ENCODE measurements at regions of chr11 and their contacts with region 1.

Region 1: GRCh38 chr11:67288452-67289225 is 464 bp upstream of the ANKRD13D start:
- DNase-seq: peak; percentile 96
- ATAC-seq: peak; percentile 76
- H3K4me3 Mint-ChIP-seq: peak overlapping the region; percentile 80
- H3K27ac Mint-ChIP-seq: peak overlapping the region; percentile 98
- H3K4me1 Mint-ChIP-seq: peaks cover 46% of the 10 kb centered on the region
- H3K27me3 Mint-ChIP-seq: no peaks in the 10 kb centered on the region
- CTCF ChIP-seq: no peak

Region 2: GRCh38 chr11:67277231-67277961 is 11.2 kb before region 1 on chr11:
- CTCF ChIA-PET with region 1: interaction called, 20 read pairs
- POLR2A ChIA-PET with region 1: interaction called, 280 read pairs
- intact Hi-C with region 1: loop called (anchors 1 kb)
- DNase-seq: peak; percentile 85
- ATAC-seq: peak; percentile 93
- H3K4me3 Mint-ChIP-seq: peak overlapping the region; percentile 59
- H3K27ac Mint-ChIP-seq: peak overlapping the region; percentile 98
- H3K4me1 Mint-ChIP-seq: peaks cover 85% of the 10 kb centered on the region
- H3K27me3 Mint-ChIP-seq: no peaks in the 10 kb centered on the region
- CTCF ChIP-seq: no peak

Region 3: DNA sequence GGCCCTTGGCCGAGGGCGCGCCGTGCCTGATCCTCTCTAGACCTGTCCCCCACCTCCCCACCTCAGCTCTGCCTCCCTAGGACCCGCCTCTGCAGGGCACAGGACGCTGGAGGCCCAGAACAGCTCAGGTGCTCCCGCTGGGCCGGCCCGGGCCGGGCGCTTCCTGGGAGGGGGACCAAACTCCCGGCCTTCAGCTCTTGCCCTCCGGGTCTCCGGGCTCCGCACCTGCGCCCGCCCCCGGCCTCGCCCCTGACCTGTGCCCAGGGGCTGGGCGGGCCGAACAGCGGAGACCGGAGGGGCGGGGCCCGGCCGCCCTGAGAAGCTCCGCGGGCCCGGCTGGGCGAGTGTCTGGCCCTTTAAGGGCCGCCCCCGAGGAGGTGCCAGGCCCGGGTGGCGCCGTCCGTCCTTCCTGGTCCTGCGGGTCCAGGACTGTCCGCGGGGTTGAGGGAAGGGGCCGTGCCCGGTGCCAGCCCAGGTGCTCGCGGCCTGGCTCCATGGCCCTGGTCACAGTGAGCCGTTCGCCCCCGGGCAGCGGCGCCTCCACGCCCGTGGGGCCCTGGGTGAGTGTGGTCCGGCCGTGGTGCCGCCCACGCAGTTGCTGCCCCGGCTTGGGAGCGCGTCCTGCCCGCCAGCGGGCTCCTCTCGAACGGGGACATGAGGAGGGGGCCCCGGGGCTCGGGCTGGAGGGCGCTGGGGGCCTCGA is 14.6 kb after region 1 on chr11 and contains the start of gene SSH3:
- CTCF ChIA-PET with region 1: no interaction called
- POLR2A ChIA-PET with region 1: interaction called, 13 read pairs
- intact Hi-C with region 1: no loop called
- DNase-seq: peak; percentile 46
- ATAC-seq: peak; percentile 89
- H3K4me3 Mint-ChIP-seq: peak within 1 kb of the TSS; percentile 19
- H3K27ac Mint-ChIP-seq: no peak within 1 kb of the TSS
- H3K4me1 Mint-ChIP-seq: peaks cover 3% of the 10 kb centered on the region
- H3K27me3 Mint-ChIP-seq: no peaks in the 10 kb centered on the region
- CTCF ChIP-seq: no peak
- total RNA-seq, gene SSH3: 5.1 and 7.7 TPM in 2 replicates

Region 4: DNA sequence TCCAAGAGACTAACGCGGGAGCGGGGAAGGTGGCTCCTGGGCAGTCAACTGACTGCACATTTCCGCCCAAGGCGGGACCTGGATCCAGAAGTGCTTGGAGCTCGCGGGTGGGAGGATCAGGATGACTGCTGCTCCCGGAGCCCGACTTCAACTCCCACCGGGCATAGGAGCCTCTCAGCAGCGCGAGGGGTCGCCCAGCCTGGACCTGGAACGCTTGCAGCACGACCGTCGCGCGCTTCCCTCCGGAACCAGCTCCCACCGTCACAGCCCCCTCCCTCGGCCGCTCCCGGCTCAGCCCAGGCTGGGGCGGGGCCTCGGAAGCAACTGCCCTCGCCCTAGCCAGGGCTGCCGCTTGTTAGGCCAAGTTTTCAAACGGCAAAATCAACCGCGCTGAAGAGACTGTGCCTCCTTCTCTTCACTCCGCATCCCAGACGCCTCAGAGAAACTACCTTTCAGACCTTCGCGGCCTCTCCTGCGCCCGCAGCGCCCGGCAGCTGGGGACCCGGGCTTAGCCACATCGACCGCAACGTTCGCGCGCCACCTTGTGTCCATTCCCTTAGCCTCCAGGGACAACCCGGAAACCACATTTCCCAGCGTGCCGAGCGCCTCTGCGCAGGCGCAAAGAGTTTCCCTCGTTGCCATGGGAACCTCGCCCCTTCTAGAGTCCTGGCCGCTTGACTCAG is 28.7 kb after region 1 on chr11:
- CTCF ChIA-PET with region 1: interaction called, 11 read pairs
- POLR2A ChIA-PET with region 1: interaction called, 51 read pairs
- intact Hi-C with region 1: loop called (anchors 1 kb)
- DNase-seq: peak; percentile 96
- ATAC-seq: peak; percentile 82
- H3K4me3 Mint-ChIP-seq: peak overlapping the region; percentile 98
- H3K27ac Mint-ChIP-seq: peak overlapping the region; percentile 98
- H3K4me1 Mint-ChIP-seq: peaks cover 23% of the 10 kb centered on the region
- H3K27me3 Mint-ChIP-seq: no peaks in the 10 kb centered on the region
- CTCF ChIP-seq: no peak

Region 5: GRCh38 chr11:67373925-67374618 is 85.4 kb after region 1 on chr11:
- CTCF ChIA-PET with region 1: no interaction called
- POLR2A ChIA-PET with region 1: interaction called, 14 read pairs
- intact Hi-C with region 1: no loop called
- DNase-seq: peak; percentile 63
- ATAC-seq: peak; percentile 47
- H3K4me3 Mint-ChIP-seq: peak overlapping the region; percentile 87
- H3K27ac Mint-ChIP-seq: peak overlapping the region; percentile 79
- H3K4me1 Mint-ChIP-seq: peaks cover 57% of the 10 kb centered on the region
- H3K27me3 Mint-ChIP-seq: no peaks in the 10 kb centered on the region
- CTCF ChIP-seq: no peak

Measured in activated B cell treated with CpG ODN at 0.5 μM for 24 hours (primary cell).